Adrenal gland (tissue), 19 donors: ENCODE measurements at regions of chr2 and their contacts with region 1.

Region 1: GRCh38 chr2:172461591-172462372 is 34.4 kb downstream of the ITGA6 start:
- DNase-seq: peak; percentile 23 to 75 (median 52)
- H3K4me3 ChIP-seq: no peak overlapping the region
- H3K27ac ChIP-seq: peak overlapping the region in 1 of 5 donors; percentile 17
- H3K4me1 ChIP-seq: peaks cover 0 to 35% of the 10 kb centered on the region in 2 donors
- H3K27me3 ChIP-seq: no peaks in the 10 kb centered on the region
- CTCF ChIP-seq: peak; percentile 53 to 80 (median 77)
- POLR2A ChIP-seq: no peak

Region 2: GRCh38 chr2:171652416-171652785 is 809.4 kb before region 1 on chr2:
- intact Hi-C with region 1: no loop called
- DNase-seq: peak in 3 of 7 donors; percentile 2 to 23 (median 17)
- H3K4me3 ChIP-seq: no peak overlapping the region
- H3K27ac ChIP-seq: no peak overlapping the region
- H3K4me1 ChIP-seq: no peaks in the 10 kb centered on the region
- H3K27me3 ChIP-seq: no peaks in the 10 kb centered on the region
- CTCF ChIP-seq: no peak
- POLR2A ChIP-seq: no peak

Region 3: GRCh38 chr2:172172513-172173173 is 289.1 kb before region 1 on chr2:
- intact Hi-C with region 1: loop called (anchors 2 to 5 kb)
- DNase-seq: peak; percentile 42 to 78 (median 66)
- H3K4me3 ChIP-seq: peak overlapping the region in 2 of 4 donors; percentile 33 to 54
- H3K27ac ChIP-seq: no peak overlapping the region
- H3K4me1 ChIP-seq: peaks cover 0 to 6% of the 10 kb centered on the region in 2 donors
- H3K27me3 ChIP-seq: no peaks in the 10 kb centered on the region
- CTCF ChIP-seq: peak; percentile 47 to 93 (median 83)
- POLR2A ChIP-seq: no peak